ENCODE measurements at regions of chr14 and their contacts with region 1.

Region 1: DNA sequence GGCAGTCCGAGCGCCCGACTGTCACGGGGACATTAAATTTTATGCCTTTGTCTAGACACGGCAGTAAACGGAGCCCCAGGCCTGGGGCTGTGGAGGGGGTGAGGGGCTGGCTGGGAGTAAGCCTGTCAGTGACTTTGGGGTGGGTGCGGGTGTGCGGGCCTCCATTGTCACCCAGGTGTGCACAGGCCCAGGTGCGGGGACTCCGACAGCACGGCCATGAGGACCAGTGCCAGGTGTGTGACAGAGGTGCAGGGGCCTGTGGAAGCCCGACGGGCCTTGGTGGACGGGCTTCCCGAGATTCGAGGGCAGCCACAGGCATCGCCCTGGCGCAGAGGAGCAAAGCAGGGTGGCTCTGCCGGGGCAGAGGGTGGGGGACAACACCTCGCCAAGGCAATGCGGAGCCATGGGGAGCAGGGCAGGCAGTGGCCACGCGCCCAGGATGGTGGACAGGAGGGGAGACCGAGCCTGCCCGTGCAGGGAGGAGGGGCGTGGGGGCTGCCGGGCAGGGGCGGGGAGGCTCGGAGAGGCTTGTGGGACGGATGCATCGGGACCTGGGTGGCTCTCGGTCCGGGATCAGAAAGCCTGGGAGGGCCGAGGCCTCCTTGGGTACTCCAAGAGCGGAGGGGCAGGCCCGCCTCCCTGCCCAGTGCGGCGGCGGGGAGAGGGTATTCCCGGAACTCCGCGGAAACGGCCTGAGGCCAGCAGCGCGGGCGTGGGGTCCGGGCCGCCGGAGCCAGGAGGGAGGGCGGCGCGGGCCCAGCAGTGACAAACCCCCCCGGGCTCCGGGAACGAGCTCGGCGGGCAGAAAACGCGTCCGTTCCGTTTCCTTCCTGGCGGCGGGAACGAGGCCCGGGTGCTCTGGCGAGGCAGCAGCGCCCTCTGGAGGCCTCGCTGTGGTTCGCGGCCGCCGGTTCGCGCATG is 1.5 kb downstream of the TMEM121 start:
- DNase-seq: peak; percentile 96
- H3K4me3 Mint-ChIP-seq: peak overlapping the region; percentile 84
- H3K27ac Mint-ChIP-seq: peak overlapping the region; percentile 77
- H3K4me1 Mint-ChIP-seq: peaks cover 12% of the 10 kb centered on the region
- H3K27me3 Mint-ChIP-seq: peaks cover 26% of the 10 kb centered on the region

Region 2: GRCh38 chr14:105473677-105474482 is 54.0 kb before region 1 on chr14:
- intact Hi-C with region 1: loop called (anchors 10 kb)
- DNase-seq: peak; percentile 89
- H3K4me3 Mint-ChIP-seq: peak overlapping the region; percentile 72
- H3K27ac Mint-ChIP-seq: no peak overlapping the region
- H3K4me1 Mint-ChIP-seq: peaks cover 5% of the 10 kb centered on the region
- H3K27me3 Mint-ChIP-seq: peaks cover 11% of the 10 kb centered on the region